ENCODE measurements at regions of chr16 and their contacts with region 1.

Region 1: DNA sequence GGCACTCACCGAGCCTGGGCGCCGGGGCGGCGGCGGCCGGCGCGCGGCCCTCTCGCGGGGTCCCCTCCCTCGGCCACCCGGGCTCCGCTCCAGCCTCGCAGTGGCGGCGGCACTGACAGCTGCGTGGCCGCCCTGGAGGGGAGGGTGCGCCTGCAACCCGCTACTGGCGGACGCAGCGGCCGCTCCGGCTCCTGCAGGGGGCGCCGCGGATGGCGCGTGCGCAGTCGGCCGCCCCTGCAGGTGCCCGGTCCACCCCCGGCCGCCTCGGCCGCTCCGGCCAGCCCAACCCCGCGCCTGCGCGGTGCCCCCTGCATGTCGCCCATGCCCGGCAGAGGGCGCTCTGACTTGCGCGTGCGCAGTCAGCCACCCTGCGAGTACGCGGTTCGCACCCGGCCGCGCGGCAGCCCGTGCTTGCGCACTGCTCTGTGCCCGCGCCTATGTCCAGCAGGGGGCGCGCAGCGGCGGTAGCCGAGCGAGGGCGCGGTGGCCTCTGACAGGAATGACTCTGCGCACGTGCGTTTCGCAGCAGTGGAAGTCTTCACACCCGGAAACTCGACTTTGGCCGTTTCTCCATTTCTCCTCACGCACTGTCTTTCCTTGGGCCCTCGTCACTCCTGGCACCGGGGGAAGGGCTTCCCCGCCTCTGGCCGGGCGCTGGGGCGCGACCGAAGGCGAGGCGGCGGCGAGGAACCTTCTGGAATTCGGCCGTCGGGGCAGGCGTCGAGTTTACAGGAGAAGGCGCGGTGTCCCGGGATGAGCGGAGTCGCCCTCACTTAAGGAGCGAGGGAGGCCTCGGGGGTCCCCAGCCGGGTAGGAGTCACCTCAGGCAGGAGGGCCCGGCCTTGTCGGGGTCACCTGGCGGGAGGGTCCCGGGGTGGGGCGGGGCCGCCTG is at the start of gene ABCA3:
- DNase-seq: peak; percentile 95
- ATAC-seq: peak; percentile 97
- total RNA-seq, gene ABCA3: 6.0 TPM

Region 2: DNA sequence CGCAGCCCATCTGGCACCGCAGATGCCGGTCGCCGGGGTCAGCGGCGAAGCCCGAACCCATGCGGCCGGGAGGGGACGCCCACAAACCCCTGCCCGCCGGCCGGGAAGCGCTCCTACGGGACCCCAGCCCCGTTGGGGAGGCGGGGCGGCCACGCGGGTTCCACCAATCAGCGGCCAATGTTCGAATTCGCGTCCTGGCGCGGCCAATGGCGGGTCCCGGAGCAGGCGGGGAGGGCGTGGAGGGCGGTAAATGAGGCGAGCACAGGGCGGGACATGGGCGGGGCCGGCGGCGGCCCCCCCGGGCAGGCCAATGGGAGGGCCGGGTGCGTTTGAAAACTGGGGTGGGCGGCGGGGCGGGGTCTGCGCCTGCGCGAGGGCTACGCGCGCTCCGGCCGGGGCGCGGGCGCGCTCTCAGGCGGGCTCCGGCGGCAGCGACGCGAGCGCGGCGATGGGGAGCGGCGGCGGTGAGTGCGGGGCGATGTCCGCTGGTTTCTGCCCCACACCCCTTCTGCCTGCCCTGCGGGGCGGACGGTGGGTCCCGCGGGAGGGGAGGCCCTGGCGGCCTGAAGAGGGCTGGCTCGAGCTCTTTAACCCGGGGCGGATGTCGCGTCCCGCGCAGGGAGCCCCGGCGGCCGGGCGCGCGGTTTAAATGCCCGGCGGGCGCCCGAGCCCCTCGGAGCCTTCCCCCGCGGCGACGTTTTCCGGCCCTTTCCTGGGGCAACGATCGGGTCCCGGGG is 88.4 kb after region 1 on chr16 and contains the start of gene CCNF:
- intact Hi-C with region 1: loop called (anchors 10 kb)
- DNase-seq: peak; percentile 99
- ATAC-seq: peak; percentile 98
- total RNA-seq, gene CCNF: 1.4 TPM

Region 3: GRCh38 chr16:2500918-2501750 is 160.3 kb after region 1 on chr16:
- intact Hi-C with region 1: loop called (anchors 5 kb)
- DNase-seq: peak; percentile 91
- ATAC-seq: peak; percentile 83